Activated CD4-positive, alpha-beta memory T cell treated with anti-CD3 and anti-CD28 coated beads for 36 hours (primary cell): ENCODE measurements at regions of chr6 and their contacts with region 1.

Region 1: DNA sequence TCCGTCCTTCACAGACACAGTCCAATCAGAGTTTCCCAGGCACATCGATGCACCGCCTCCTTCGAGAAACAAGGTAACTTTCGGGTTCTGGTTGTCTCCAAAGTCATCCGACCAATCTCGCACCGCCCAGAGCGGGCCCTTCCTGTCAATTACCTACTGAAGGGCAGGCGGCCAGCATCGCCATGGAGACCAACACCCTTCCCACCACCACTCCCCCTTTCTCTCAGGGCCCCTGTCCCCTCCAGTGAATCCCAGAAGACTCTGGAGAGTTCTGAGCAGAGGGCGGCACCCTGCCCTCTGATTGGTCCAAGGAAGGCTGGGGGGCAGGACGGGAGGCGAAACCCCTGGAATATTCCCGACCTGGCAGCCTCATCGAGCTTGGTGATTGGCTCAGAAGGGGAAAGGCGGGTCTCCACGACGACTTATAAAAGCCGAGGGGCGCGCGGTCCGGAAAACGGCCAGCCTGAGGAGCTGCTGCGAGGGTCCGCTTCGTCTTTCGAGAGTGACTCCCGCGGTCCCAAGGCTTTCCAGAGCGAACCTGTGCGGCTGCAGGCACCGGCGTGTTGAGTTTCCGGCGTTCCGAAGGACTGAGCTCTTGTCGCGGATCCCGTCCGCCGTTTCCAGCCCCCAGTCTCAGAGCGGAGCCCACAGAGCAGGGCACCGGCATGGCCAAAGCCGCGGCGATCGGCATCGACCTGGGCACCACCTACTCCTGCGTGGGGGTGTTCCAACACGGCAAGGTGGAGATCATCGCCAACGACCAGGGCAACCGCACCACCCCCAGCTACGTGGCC is at the start of gene HSPA1B:
- DNase-seq: peak; percentile 98
- H3K4me3 Mint-ChIP-seq: peak within 1 kb of the TSS; percentile 86
- H3K27ac Mint-ChIP-seq: peak within 1 kb of the TSS; percentile 98
- H3K4me1 Mint-ChIP-seq: peaks cover 43% of the 10 kb centered on the region
- H3K27me3 Mint-ChIP-seq: no peaks in the 10 kb centered on the region
- total RNA-seq, gene HSPA1B: 59.5 to 62.3 TPM

Region 2: DNA sequence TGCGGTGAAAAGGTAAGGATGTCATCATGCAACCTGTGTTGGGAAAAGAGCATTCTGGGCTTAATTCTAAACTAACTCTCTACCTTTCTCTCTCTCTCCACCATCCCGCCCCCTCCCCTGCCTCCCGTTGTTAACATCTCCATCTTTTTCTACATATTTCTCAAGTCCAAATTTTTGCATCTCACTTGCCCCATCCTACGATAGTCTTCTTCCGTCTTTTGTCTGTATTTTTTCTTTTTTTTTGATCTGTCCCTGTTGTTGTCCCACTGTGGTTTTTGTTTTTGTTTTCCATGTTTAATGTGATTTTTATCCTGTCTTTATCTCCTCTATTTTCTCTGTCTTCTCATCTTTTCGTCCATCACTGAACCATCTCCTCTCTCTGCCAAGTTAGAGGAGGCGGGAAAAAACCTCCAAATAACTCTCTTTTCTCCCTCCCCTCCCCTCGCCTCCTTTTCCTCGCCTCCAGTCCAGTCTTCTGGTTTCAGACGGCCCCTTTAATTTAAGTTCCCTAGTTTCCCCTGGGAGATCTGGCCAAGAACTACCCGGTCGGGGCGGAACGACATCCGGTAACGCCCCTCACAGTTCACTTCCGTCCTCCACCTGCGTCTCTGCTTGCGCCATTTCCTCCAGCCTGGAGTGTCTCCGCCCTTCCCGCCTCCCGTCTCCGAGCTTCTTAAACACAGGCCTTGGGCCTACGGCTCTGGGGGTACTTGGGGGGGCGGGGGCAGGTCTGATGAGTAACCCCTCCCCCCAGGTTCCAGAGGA is 280.3 kb before region 1 on chr6 and contains the start of gene NFKBIL1:
- CTCF ChIA-PET with region 1: no interaction called
- POLR2A ChIA-PET with region 1: no interaction called
- intact Hi-C with region 1: loop called (anchors 2 kb)
- DNase-seq: peak; percentile 96
- H3K4me3 Mint-ChIP-seq: peak within 1 kb of the TSS; percentile 76
- H3K27ac Mint-ChIP-seq: peak within 1 kb of the TSS; percentile 89
- H3K4me1 Mint-ChIP-seq: peaks cover 44% of the 10 kb centered on the region
- H3K27me3 Mint-ChIP-seq: no peaks in the 10 kb centered on the region
- total RNA-seq, gene NFKBIL1: 18.5 to 21.5 TPM

Region 3: DNA sequence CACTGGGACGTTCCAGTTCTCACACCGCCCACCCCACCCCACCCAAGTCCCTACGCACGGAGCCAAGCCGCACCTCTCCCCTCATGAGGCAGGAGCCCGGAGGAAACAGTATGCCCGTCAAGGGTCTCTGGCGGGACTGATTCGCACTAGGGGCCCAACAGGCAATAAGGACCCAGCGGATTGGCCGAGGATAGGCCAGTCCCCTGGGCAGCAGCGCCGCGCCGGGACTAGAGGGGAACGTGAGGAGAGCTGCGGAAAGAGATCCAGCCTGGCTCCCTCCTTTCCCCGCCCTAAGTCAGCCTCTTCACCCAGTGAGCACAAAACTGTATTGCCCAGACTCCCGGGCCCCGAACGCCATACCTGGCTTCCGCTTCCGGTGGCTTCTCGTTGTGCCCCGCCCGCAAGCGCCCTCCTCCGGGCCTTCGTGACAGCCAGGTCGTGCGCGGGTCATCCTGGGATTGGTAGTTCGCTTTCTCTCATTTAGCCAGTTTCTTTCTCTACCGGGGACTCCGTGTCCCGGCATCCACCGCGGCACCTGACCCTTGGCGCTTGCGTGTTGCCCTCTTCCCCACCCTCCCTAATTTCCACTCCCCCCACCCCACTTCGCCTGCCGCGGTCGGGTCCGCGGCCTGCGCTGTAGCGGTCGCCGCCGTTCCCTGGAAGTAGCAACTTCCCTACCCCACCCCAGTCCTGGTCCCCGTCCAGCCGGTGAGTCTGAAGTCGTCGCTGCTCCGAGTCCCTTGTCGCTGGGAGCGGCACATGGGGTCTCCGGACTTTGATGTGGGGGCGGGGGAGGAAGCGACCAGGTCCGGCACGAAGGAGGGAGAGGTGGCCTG is 161.8 kb before region 1 on chr6 and contains the start of gene CSNK2B:
- CTCF ChIA-PET with region 1: no interaction called
- POLR2A ChIA-PET with region 1: interaction called, 5 read pairs
- intact Hi-C with region 1: loop called (anchors 1 kb)
- DNase-seq: peak; percentile 99
- H3K4me3 Mint-ChIP-seq: peak within 1 kb of the TSS; percentile 88
- H3K27ac Mint-ChIP-seq: peak within 1 kb of the TSS; percentile 95
- H3K4me1 Mint-ChIP-seq: peaks cover 61% of the 10 kb centered on the region
- H3K27me3 Mint-ChIP-seq: no peaks in the 10 kb centered on the region
- total RNA-seq, gene CSNK2B: 227 to 234 TPM

Region 4: GRCh38 chr6:31729515-31729978 is 97.9 kb before region 1 on chr6:
- CTCF ChIA-PET with region 1: interaction called, 28 read pairs
- POLR2A ChIA-PET with region 1: interaction called, 15 read pairs
- intact Hi-C with region 1: no loop called
- DNase-seq: peak; percentile 84
- H3K4me3 Mint-ChIP-seq: peak overlapping the region; percentile 80
- H3K27ac Mint-ChIP-seq: peak overlapping the region; percentile 43
- H3K4me1 Mint-ChIP-seq: peaks cover 69% of the 10 kb centered on the region
- H3K27me3 Mint-ChIP-seq: no peaks in the 10 kb centered on the region

Region 5: GRCh38 chr6:31776989-31777666 is 50.4 kb before region 1 on chr6 and contains the start of gene VWA7:
- CTCF ChIA-PET with region 1: no interaction called
- POLR2A ChIA-PET with region 1: no interaction called
- intact Hi-C with region 1: loop called (anchors 1 kb)
- DNase-seq: peak; percentile 91
- H3K4me3 Mint-ChIP-seq: peak within 1 kb of the TSS; percentile 26
- H3K27ac Mint-ChIP-seq: peak within 1 kb of the TSS; percentile 74
- H3K4me1 Mint-ChIP-seq: peaks cover 36% of the 10 kb centered on the region
- H3K27me3 Mint-ChIP-seq: no peaks in the 10 kb centered on the region
- total RNA-seq, gene VWA7: 2.0 to 2.1 TPM

Region 6: GRCh38 chr6:31806465-31807272 is 20.8 kb before region 1 on chr6 and contains the start of gene LSM2:
- CTCF ChIA-PET with region 1: interaction called, 7 read pairs
- POLR2A ChIA-PET with region 1: interaction called, 26 read pairs
- intact Hi-C with region 1: loop called (anchors 2 kb)
- DNase-seq: peak; percentile 98
- H3K4me3 Mint-ChIP-seq: peak within 1 kb of the TSS; percentile 86
- H3K27ac Mint-ChIP-seq: peak within 1 kb of the TSS; percentile 87
- H3K4me1 Mint-ChIP-seq: peaks cover 30% of the 10 kb centered on the region
- H3K27me3 Mint-ChIP-seq: no peaks in the 10 kb centered on the region
- total RNA-seq, gene LSM2: 142 to 143 TPM

Region 7: GRCh38 chr6:31870385-31870921 is 43.0 kb after region 1 on chr6:
- CTCF ChIA-PET with region 1: no interaction called
- POLR2A ChIA-PET with region 1: no interaction called
- intact Hi-C with region 1: no loop called
- DNase-seq: no peak
- H3K4me3 Mint-ChIP-seq: no peak overlapping the region
- H3K27ac Mint-ChIP-seq: no peak overlapping the region
- H3K4me1 Mint-ChIP-seq: no peaks in the 10 kb centered on the region
- H3K27me3 Mint-ChIP-seq: no peaks in the 10 kb centered on the region

Region 8: DNA sequence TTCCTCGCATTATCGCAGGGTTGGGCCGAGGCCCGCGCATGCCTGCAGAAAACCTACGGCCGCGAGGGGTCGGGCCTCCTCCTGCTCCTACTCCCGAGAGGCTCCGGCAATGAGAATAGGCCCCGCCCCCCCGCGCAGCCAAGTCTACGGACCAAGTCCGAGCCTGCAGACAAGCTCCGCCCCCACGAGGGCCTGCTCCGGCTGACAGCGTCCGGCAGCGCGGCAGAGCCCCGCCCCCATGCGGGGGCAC is 368.1 kb after region 1 on chr6:
- CTCF ChIA-PET with region 1: no interaction called
- POLR2A ChIA-PET with region 1: no interaction called
- intact Hi-C with region 1: loop called (anchors 10 kb)
- DNase-seq: peak; percentile 100
- H3K4me3 Mint-ChIP-seq: peak overlapping the region; percentile 96
- H3K27ac Mint-ChIP-seq: peak overlapping the region; percentile 98
- H3K4me1 Mint-ChIP-seq: peaks cover 23% of the 10 kb centered on the region
- H3K27me3 Mint-ChIP-seq: no peaks in the 10 kb centered on the region